ENCODE measurements at regions of chr9 and their contacts with region 1.

Region 1: DNA sequence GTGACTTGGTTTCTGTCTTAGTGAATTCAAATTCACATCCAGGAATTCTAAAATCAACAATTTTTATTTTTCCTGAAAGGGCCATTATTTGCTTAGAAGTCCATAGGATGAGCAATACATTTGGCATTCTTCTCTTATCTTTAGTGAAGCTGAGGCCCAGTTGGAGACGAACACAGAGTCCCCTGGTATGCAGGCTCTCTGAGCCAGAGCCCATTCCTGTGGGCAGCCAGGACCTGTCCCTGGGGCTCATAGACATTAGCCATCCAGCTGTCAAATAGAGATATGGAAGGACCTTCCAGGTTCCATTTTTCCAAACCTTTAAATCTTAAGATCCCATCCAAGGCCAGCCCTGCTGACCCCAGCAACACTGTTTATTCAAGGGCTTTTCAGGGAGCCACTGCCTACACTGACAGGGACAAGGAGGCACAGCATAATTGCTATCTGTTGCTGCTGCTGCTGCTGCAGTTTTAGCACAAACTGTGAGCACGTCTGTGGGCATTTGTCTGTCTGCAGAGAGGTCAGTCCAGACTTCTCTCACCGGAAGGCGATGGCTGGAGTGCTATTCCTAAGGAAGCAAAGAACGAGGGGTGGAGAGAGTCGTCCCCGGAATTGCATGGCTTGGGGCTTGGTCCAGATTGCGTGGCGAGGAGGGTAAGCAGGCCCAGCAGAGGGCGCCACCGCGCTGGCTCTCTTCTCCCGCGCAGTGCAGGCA is 639.0 kb downstream of the CCDC171 start:
- DNase-seq: peak; percentile 78
- H3K4me3 ChIP-seq: no peak overlapping the region
- H3K27ac ChIP-seq: peak overlapping the region in 1 of 4 donors; percentile 5
- H3K4me1 ChIP-seq: peaks cover 6 to 12% (median 10%) of the 10 kb centered on the region in 4 donors
- H3K27me3 ChIP-seq: no peaks in the 10 kb centered on the region
- CTCF ChIP-seq: peak; percentile 71 to 82 (median 76)
- EP300 ChIP-seq: no peak
- POLR2A ChIP-seq: no peak

Region 2: GRCh38 chr9:16152276-16153101 is 39.4 kb before region 1 on chr9:
- in situ Hi-C with region 1: no loop called
- intact Hi-C with region 1: loop called (anchors 1 kb)
- DNase-seq: no peak
- H3K4me3 ChIP-seq: no peak overlapping the region
- H3K27ac ChIP-seq: peak overlapping the region in 1 of 4 donors; percentile 59
- H3K4me1 ChIP-seq: peaks cover 0 to 4% (median 0%) of the 10 kb centered on the region in 4 donors
- H3K27me3 ChIP-seq: no peaks in the 10 kb centered on the region
- CTCF ChIP-seq: no peak
- EP300 ChIP-seq: no peak
- POLR2A ChIP-seq: no peak

Region 3: DNA sequence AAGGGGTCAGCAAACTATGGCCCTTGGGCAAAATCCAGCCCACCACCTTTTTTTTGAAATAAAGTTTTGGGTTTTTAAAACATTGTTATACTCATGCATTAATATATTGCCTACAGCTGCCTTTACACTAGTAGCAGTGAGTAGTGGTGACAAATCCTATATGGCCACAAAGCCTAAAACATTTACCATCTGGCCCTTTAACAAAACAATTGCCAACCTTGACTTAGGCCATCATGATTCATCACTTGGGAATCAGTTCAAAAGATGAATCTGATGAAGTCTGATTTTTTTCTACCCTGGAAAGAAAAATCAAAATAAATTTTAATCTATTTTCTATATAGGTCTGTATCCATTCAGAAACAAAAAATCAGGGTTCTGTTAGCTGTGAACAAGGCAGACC is 193.7 kb after region 1 on chr9:
- in situ Hi-C with region 1: no loop called
- intact Hi-C with region 1: no loop called
- DNase-seq: no peak
- H3K4me3 ChIP-seq: no peak overlapping the region
- H3K27ac ChIP-seq: no peak overlapping the region
- H3K4me1 ChIP-seq: no peaks in the 10 kb centered on the region
- H3K27me3 ChIP-seq: no peaks in the 10 kb centered on the region
- CTCF ChIP-seq: no peak
- EP300 ChIP-seq: no peak
- POLR2A ChIP-seq: no peak

Region 4: DNA sequence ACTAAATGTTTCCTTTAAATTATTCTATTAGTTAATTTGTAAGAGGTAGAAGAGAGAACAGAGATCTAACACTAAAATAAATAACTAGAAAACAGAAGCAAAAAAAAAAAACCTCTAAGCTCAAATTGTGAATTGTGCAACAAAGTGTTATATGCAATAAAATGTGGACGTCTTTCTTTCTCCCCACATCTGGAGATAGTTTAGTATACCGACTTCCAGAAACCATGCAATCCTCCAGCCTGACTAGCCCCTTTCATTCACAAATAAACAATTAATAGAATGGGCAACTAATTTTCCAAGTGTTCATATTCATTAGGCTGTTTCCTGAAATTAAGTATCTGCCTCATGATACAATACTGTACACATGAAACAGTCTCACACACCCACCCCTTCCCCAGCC is 420.1 kb after region 1 on chr9:
- in situ Hi-C with region 1: loop called in 1 of 4 experiments (anchors 25 kb)
- intact Hi-C with region 1: no loop called
- DNase-seq: no peak
- H3K4me3 ChIP-seq: no peak overlapping the region
- H3K27ac ChIP-seq: no peak overlapping the region
- H3K4me1 ChIP-seq: no peaks in the 10 kb centered on the region
- H3K27me3 ChIP-seq: no peaks in the 10 kb centered on the region
- CTCF ChIP-seq: no peak
- EP300 ChIP-seq: no peak
- POLR2A ChIP-seq: no peak

Region 5: GRCh38 chr9:17462869-17463464 is 1271.1 kb after region 1 on chr9:
- in situ Hi-C with region 1: loop called in 1 of 4 experiments (anchors 25 kb)
- intact Hi-C with region 1: no loop called
- DNase-seq: peak; percentile 14
- H3K4me3 ChIP-seq: no peak overlapping the region
- H3K27ac ChIP-seq: no peak overlapping the region
- H3K4me1 ChIP-seq: no peaks in the 10 kb centered on the region
- H3K27me3 ChIP-seq: no peaks in the 10 kb centered on the region
- CTCF ChIP-seq: peak; percentile 64 to 72 (median 69)
- EP300 ChIP-seq: no peak
- POLR2A ChIP-seq: no peak

Measured in transverse colon (tissue), 4 donors.